ENCODE measurements at regions of chr19 and their contacts with region 1.

Region 1: GRCh38 chr19:48588670-48589399 is 17.7 kb upstream of the SPACA4 start:
- DNase-seq: peak; percentile 73 to 83
- ATAC-seq: peak; percentile 67 to 72
- H3K4me3 ChIP-seq: peak overlapping the region; percentile 41 to 50 (median 49)
- H3K27ac ChIP-seq: peak overlapping the region in 1 of 4 donors; percentile 32
- H3K4me1 ChIP-seq: peaks cover 4 to 5% of the 10 kb centered on the region in 2 donors
- H3K27me3 ChIP-seq: no peaks in the 10 kb centered on the region
- CTCF ChIP-seq: peak; percentile 74 to 98 (median 93)
- POLR2A ChIP-seq: no peak

Region 2: GRCh38 chr19:48492925-48493717 is 95.7 kb before region 1 on chr19:
- in situ Hi-C with region 1: loop called in 2 of 4 experiments (anchors 5 kb)
- intact Hi-C with region 1: loop called (anchors 1 kb)
- DNase-seq: peak; percentile 80 to 83
- ATAC-seq: peak; percentile 67 to 70
- H3K4me3 ChIP-seq: peak overlapping the region; percentile 51 to 63 (median 52)
- H3K27ac ChIP-seq: peak overlapping the region; percentile 6 to 68 (median 54)
- H3K4me1 ChIP-seq: peaks cover 3 to 8% of the 10 kb centered on the region in 2 donors
- H3K27me3 ChIP-seq: peaks cover 25 to 50% (median 40%) of the 10 kb centered on the region in 3 donors
- CTCF ChIP-seq: no peak
- POLR2A ChIP-seq: peak in 1 of 2 donors; percentile 39

Region 3: DNA sequence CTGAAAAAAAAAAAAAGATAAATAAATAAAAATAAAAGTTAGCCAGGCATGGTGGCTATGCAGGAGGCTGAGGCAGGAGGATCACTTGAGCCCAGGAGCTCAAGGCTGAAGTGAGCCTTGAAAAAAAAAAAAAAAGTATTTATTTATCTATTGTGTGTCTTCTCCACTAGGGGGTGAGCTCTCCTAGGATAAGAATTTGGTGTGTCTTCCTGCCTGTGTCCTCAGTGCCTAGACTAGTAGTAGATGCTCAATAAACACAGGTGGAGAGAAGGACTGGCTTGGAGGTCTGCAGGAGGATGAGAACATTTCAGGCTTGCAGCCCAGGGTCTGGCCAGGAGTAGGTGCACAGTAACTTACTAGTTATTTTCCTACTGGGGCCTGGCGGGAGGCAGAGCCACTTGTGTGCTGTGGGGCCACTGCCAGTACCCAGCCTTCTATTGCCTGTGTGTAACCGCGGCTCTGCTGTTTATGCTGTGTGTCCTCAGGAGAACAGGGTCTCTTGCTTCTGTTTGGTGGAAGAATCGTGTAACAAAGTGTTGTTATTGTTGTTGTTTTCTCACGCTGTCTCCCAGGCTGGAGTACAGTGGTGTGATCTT is 82.6 kb before region 1 on chr19:
- in situ Hi-C with region 1: loop called in 2 of 4 experiments (anchors 5 kb)
- intact Hi-C with region 1: loop called (anchors 1 kb)
- DNase-seq: no peak
- ATAC-seq: peak in 1 of 2 donors; percentile 49
- H3K4me3 ChIP-seq: no peak overlapping the region
- H3K27ac ChIP-seq: no peak overlapping the region
- H3K4me1 ChIP-seq: peaks cover 4 to 6% of the 10 kb centered on the region in 2 donors
- H3K27me3 ChIP-seq: peaks cover 8 to 19% (median 11%) of the 10 kb centered on the region in 3 donors
- CTCF ChIP-seq: peak; percentile 34 to 67 (median 54)
- POLR2A ChIP-seq: no peak

Region 4: GRCh38 chr19:48613024-48613776 is 24.4 kb after region 1 on chr19:
- in situ Hi-C with region 1: no loop called
- intact Hi-C with region 1: loop called (anchors 2 kb)
- DNase-seq: peak in 1 of 2 donors; percentile 81
- ATAC-seq: peak; percentile 57 to 78
- H3K4me3 ChIP-seq: peak overlapping the region in 2 of 4 donors; percentile 10 to 37
- H3K27ac ChIP-seq: peak overlapping the region; percentile 78 to 89 (median 84)
- H3K4me1 ChIP-seq: peaks cover 26 to 43% of the 10 kb centered on the region in 2 donors
- H3K27me3 ChIP-seq: no peaks in the 10 kb centered on the region
- CTCF ChIP-seq: no peak
- POLR2A ChIP-seq: no peak

Measured in gastrocnemius medialis (tissue), 4 donors.